GM10248 (cell line): ENCODE measurements at regions of chr1 and their contacts with region 1.

Region 1: DNA sequence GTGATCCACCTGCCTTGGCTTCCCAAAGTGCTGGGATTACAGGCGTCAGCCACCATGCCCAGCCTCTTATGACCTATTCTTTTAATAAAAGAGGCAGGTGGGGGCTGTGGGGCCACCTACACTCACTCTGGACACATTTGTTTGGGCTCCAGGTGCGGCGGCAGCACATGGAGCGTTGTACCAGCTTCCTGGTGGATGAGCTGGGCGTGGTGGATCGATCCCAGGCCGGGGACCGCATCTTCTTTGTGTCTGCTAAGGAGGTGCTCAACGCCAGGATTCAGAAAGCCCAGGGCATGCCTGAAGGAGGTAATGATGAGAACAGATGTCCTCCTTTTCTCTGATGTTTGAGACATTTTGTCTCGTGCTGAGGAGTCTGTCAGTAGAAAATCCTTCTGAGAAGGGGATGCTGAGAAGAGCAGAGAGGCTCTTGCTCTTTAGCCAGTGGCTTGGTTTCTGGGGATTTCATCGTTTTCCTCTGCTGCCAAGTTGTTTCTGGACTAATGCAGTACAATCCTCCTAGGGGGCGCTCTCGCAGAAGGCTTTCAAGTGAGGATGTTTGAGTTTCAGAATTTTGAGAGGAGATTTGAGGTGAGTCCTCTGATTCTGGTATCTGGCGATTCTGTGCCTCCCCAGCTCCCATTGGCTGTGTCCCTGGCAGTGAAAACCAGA is 17.9 kb upstream of the MIIP start:
- DNase-seq: no peak
- CTCF ChIP-seq: peak; percentile 69

Region 2: DNA sequence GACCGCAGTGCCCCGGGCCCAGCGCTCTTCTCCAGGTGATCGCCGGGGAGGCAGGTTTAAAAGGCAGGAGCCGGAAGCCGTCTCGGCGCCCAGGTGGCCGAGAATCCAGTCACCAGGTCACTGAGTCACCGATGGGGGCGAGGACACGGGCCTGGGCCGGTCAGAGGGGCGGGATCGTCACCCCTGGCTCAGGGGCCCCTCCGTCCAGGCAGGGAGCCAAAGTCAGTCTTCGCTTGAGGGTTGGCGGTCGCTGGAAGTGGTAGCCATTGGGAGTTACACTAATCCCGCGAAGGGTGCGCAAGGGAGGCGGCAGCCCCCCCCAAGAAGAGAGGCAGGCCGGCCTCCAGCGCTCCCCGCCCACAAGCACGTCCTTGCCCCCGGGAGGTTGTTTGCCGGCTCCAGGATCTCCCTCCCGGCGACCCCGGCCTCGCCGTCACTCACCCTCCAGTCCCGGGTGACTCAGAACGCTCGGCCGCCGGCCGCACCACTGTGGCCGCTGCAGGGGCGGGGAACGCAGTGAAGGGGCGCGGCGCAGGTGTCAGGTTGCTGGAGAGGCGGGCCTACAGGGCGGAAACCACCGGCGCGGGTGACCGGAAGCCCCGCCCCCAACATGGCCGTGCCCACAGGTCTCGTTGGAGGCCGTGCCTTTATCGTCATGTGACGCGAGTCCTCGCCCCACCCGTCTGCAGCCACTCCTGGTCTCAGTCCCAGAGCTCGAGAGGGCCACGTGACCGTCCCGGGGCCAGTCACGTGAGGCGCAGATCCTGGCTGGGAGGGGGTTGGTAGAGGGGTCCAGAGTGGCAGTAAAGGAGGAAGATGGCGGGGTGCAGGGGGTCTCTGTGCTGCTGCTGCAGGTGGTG is 195.7 kb before region 1 on chr1 and contains the starts of genes CLCN6 and MTHFR:
- CTCF ChIA-PET with region 1: no interaction called
- POLR2A ChIA-PET with region 1: no interaction called
- DNase-seq: peak; percentile 99
- CTCF ChIP-seq: no peak

Region 3: GRCh38 chr1:11990303-11991032 is 10.9 kb before region 1 on chr1:
- CTCF ChIA-PET with region 1: interaction called, 26 read pairs
- POLR2A ChIA-PET with region 1: no interaction called
- DNase-seq: no peak
- CTCF ChIP-seq: no peak